ENCODE measurements at regions of chr16 and their contacts with region 1.

Region 1: DNA sequence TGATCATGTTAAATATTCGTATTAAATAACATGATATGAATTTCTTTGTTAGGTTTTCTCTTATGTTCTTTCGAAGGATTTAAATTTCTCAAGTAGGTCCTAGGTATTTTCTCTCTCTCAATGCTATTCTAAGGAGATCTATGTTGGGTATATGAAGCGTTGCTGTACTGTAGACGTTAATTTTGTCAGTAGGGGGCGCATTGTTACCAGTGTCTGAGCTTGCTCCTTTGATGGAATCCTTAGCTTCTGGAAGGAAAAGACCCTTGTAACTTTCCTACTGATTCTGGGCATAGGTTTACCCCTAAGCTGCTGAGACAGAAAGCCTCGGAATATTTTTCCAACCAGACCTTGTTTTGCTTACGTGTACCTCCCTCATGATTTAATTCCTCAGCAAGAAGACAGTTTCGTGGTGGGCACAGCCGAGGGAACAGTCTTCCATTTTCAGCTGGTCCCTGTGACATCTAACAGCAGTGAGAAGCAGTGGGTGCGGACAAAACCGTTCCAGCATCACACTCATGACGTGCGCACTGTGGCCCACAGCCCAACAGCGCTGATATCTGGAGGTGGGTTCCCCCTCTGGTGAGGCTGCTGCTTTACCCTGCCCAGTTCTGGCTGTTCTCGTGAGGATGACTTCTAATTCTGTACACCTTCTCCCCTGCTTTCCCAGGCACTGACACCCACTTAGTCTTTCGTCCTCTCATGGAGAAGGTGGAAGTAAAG is 17.9 kb downstream of the UTP4 start:
- DNase-seq: peak in 3 of 6 donors; percentile 21 to 55 (median 50)
- ATAC-seq: peak; percentile 49 to 82 (median 74)
- H3K4me3 ChIP-seq: no peak overlapping the region
- H3K27ac ChIP-seq: no peak overlapping the region
- H3K4me1 ChIP-seq: peaks cover 0 to 7% (median 3%) of the 10 kb centered on the region in 3 donors
- H3K27me3 ChIP-seq: no peaks in the 10 kb centered on the region
- CTCF ChIP-seq: peak; percentile 47 to 62 (median 54)

Region 2: DNA sequence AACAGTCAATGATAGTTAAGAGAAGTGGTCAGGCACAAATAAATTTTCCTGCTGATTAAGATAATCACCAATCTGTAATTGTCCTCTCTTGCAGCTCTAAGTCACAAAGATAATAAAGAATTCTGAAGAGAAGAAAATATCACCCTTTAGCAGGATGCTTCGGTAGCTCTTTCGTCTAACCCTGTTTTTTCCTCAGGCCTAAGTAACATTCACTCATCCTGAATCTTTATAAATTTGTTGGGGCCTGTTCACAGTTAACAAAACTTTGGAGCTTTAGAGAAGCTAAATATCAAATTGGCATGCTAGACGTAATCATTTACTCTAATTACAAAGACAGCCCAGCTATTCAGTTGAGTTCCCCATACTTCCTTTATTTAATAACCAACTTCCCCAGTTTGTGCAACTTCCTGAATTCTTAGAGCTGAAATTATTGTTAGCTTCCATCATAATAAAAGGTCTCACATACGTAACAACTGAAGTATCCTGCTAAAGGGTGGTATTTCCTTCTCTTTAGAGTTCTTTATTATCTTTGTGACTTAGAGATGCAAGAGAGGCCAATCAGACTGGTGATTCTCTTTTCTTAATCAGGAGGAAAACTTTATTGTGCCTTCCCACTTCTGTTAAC is 188.4 kb before region 1 on chr16:
- intact Hi-C with region 1: no loop called
- DNase-seq: no peak
- ATAC-seq: no peak
- H3K4me3 ChIP-seq: no peak overlapping the region
- H3K27ac ChIP-seq: no peak overlapping the region
- H3K4me1 ChIP-seq: no peaks in the 10 kb centered on the region
- H3K27me3 ChIP-seq: no peaks in the 10 kb centered on the region
- CTCF ChIP-seq: no peak

Region 3: GRCh38 chr16:69073161-69073669 is 77.1 kb before region 1 on chr16:
- intact Hi-C with region 1: no loop called
- DNase-seq: peak in 1 of 6 donors; percentile 18
- ATAC-seq: peak in 3 of 4 donors; percentile 45 to 77 (median 46)
- H3K4me3 ChIP-seq: no peak overlapping the region
- H3K27ac ChIP-seq: peak overlapping the region in 1 of 4 donors; percentile 28
- H3K4me1 ChIP-seq: no peaks in the 10 kb centered on the region
- H3K27me3 ChIP-seq: no peaks in the 10 kb centered on the region
- CTCF ChIP-seq: no peak

Region 4: GRCh38 chr16:69286941-69287713 is 136.8 kb after region 1 on chr16:
- intact Hi-C with region 1: loop called in 2 of 3 experiments (anchors 5 kb)
- DNase-seq: peak in 3 of 6 donors; percentile 15 to 34 (median 23)
- ATAC-seq: peak; percentile 60 to 84 (median 76)
- H3K4me3 ChIP-seq: no peak overlapping the region
- H3K27ac ChIP-seq: no peak overlapping the region
- H3K4me1 ChIP-seq: no peaks in the 10 kb centered on the region
- H3K27me3 ChIP-seq: no peaks in the 10 kb centered on the region
- CTCF ChIP-seq: peak; percentile 26 to 71 (median 40)

Measured in pancreas (tissue), 10 donors.